ENCODE measurements at regions of chr4 and their contacts with region 1.

Region 1: DNA sequence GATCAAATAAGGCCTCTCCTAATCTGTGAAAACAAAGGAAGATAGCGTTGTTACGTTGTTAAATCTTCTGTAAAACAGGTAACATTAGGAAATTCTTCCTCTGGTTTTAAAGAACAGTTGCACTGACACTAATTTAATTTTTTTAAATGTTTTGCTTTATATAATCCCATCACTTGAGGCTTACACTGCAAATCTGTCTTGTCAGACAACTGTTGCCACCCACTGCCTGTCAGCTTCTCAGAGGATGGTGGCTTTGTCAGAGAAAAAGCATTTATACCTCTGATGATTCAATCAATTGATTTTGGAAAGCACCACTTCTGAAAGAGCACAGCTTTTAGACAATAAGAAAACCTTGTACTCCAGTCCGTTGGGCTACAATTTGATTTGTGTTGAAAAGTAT is 799.1 kb downstream of the FSTL5 start:
- DNase-seq: no peak
- H3K4me3 ChIP-seq: no peak overlapping the region
- H3K4me3 Mint-ChIP-seq: no peak overlapping the region
- H3K27ac Mint-ChIP-seq: no peak overlapping the region
- H3K4me1 ChIP-seq: no peaks in the 10 kb centered on the region
- H3K4me1 Mint-ChIP-seq: no peaks in the 10 kb centered on the region
- H3K27me3 ChIP-seq: no peaks in the 10 kb centered on the region
- H3K27me3 Mint-ChIP-seq: no peaks in the 10 kb centered on the region
- CTCF ChIP-seq: no peak

Region 2: GRCh38 chr4:162586266-162586665 is 1221.6 kb after region 1 on chr4:
- CTCF ChIA-PET with region 1: no interaction called
- POLR2A ChIA-PET with region 1: no interaction called
- intact Hi-C with region 1: loop called (anchors 10 kb)
- DNase-seq: no peak
- H3K4me3 ChIP-seq: no peak overlapping the region
- H3K4me3 Mint-ChIP-seq: no peak overlapping the region
- H3K27ac Mint-ChIP-seq: no peak overlapping the region
- H3K4me1 ChIP-seq: no peaks in the 10 kb centered on the region
- H3K4me1 Mint-ChIP-seq: no peaks in the 10 kb centered on the region
- H3K27me3 ChIP-seq: no peaks in the 10 kb centered on the region
- H3K27me3 Mint-ChIP-seq: no peaks in the 10 kb centered on the region
- CTCF ChIP-seq: no peak